CD4-positive, alpha-beta T cell (primary cell): ENCODE measurements at regions of chr19 and their contacts with region 1.

Region 1: GRCh38 chr19:8609279-8610040 is 1.1 kb downstream of the ADAMTS10 start:
- DNase-seq: peak in 7 of 14 experiments; percentile 16 to 52 (median 26)
- ATAC-seq: peak; percentile 16
- H3K4me3 ChIP-seq: peak overlapping the region; percentile 75
- H3K4me3 Mint-ChIP-seq: peak overlapping the region; percentile 93
- H3K27ac ChIP-seq: no peak overlapping the region
- H3K27ac Mint-ChIP-seq: peak overlapping the region; percentile 73
- H3K4me1 ChIP-seq: peaks cover 34% of the 10 kb centered on the region
- H3K4me1 Mint-ChIP-seq: peaks cover 47% of the 10 kb centered on the region
- H3K27me3 ChIP-seq: no peaks in the 10 kb centered on the region
- H3K27me3 Mint-ChIP-seq: no peaks in the 10 kb centered on the region
- CTCF ChIP-seq: no peak

Region 2: DNA sequence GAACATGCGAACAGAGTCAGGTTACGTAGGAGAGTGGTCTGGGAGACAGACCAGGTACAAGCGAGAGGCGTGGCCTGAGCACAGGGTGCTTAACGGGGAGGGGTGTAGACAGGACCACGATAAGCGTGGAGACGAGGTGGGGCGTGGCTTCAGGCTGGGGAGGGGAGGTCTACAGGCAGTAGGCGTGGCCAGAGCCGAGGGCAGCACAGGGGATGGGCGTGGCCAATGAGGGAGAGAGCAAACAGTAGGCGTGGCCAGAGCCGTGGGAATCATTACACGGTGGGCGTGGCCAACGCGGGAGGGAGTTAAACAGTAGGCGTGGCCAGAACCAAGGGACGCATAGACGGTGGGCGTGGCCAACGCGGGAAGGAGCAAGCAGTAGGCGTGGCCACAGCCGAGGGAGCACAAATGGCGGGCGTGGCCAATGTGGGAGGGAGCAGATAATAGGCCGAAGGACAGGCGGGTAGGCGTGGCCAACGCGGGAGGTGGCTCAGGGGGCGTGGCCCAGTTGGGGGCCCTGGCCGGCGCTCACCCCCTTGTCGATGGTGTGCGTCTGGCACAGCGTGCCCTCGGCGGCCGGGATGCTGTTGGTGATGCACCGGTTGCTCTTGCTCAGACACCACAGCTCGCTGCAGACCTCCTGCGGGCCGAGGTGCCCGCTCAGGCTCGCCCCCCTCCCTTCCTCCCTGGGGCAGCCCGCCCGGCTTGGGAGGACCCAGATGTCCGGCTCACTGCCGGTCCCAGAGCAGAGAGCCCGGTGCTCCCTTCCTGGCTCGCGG is 17.0 kb before region 1 on chr19:
- CTCF ChIA-PET with region 1: no interaction called
- POLR2A ChIA-PET with region 1: interaction called, 5 read pairs
- intact Hi-C with region 1: loop called in 1 of 2 experiments (anchors 2 kb)
- DNase-seq: peak; percentile 91 to 99 (median 95)
- ATAC-seq: peak; percentile 87
- H3K4me3 ChIP-seq: peak overlapping the region; percentile 58
- H3K4me3 Mint-ChIP-seq: peak overlapping the region; percentile 83
- H3K27ac ChIP-seq: no peak overlapping the region
- H3K27ac Mint-ChIP-seq: peak overlapping the region; percentile 63
- H3K4me1 ChIP-seq: peaks cover 20% of the 10 kb centered on the region
- H3K4me1 Mint-ChIP-seq: peaks cover 20% of the 10 kb centered on the region
- H3K27me3 ChIP-seq: no peaks in the 10 kb centered on the region
- H3K27me3 Mint-ChIP-seq: no peaks in the 10 kb centered on the region
- CTCF ChIP-seq: no peak

Region 3: DNA sequence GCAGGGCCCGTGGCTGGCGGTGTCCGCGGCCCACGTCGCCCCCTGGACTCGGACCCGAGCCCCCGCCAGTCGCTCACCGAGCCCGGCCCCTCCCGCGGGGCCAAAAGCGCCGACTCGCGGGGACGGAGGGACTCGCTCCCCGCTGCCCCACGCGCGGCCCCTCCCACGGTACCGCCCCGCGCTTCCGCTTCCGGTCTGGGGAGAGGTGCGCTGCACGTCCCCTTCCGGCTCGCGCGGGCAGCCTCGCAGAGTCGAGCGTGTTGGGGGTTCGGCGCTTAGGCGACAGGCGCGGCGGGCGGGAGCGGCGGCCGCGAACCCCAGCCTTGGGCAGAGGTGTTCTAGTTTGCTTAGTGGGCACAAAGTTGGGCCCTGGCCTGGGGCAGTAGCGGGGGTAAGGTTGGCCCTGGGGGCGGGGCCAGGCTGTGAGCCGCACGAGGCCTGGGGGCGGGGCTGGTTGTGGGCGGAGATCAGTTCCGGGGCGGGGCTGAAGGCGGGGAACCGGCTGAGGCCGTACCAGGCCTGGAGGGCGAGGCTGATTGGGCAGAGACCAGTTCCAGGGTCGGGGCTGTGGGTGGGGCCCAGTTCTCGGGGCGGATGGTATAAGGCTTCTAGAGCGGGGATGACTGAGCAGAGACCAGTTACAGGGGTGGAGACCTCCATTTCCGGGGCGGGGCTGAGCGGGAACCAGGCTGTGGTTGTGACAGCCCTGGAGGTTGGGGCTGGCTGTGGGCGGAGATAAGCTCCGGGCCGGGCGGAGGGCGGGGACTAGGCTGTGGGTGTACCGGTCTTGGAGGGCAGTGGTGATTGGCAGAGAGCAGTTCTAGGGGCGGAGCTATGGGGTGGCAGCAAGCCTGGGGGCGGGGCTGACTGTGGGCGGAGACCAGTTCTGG is 222.9 kb after region 1 on chr19 and contains the starts of genes MBD3L1 and ZNF558:
- CTCF ChIA-PET with region 1: no interaction called
- POLR2A ChIA-PET with region 1: no interaction called
- intact Hi-C with region 1: loop called in 1 of 2 experiments (anchors 2 kb)
- DNase-seq: peak; percentile 95 to 100 (median 99)
- ATAC-seq: peak; percentile 88
- H3K4me3 ChIP-seq: peak within 1 kb of the TSS; percentile 90
- H3K4me3 Mint-ChIP-seq: peak within 1 kb of the TSS; percentile 97
- H3K27ac ChIP-seq: peak within 1 kb of the TSS; percentile 89 to 92
- H3K27ac Mint-ChIP-seq: peak within 1 kb of the TSS; percentile 95
- H3K4me1 ChIP-seq: peaks cover 15% of the 10 kb centered on the region
- H3K4me1 Mint-ChIP-seq: peaks cover 31% of the 10 kb centered on the region
- H3K27me3 ChIP-seq: no peaks in the 10 kb centered on the region
- H3K27me3 Mint-ChIP-seq: no peaks in the 10 kb centered on the region
- CTCF ChIP-seq: peak; percentile 48
- total RNA-seq, gene MBD3L1: not detected
- total RNA-seq, gene ZNF558: 22.2 to 23.3 TPM